CD8-positive, alpha-beta T cell (primary cell): ENCODE measurements at regions of chr5 and their contacts with region 1.

Region 1: GRCh38 chr5:140113699-140114263 is at the start of gene PURA:
- DNase-seq: peak; percentile 93 to 98 (median 98)
- ATAC-seq: peak; percentile 91
- H3K4me3 ChIP-seq: peak within 1 kb of the TSS; percentile 74 to 88
- H3K4me3 Mint-ChIP-seq: peak within 1 kb of the TSS; percentile 91
- H3K27ac ChIP-seq: peak within 1 kb of the TSS; percentile 82 to 84
- H3K27ac Mint-ChIP-seq: peak within 1 kb of the TSS; percentile 95
- H3K4me1 ChIP-seq: peaks cover 69% of the 10 kb centered on the region
- H3K4me1 Mint-ChIP-seq: peaks cover 77% of the 10 kb centered on the region
- H3K27me3 ChIP-seq: no peaks in the 10 kb centered on the region
- H3K27me3 Mint-ChIP-seq: peaks cover 12% of the 10 kb centered on the region
- CTCF ChIP-seq: no peak
- total RNA-seq, gene PURA: 4.0 to 4.3 TPM

Region 2: GRCh38 chr5:138337685-138338410 is 1775.9 kb before region 1 on chr5 and contains the start of gene FAM53C:
- CTCF ChIA-PET with region 1: no interaction called
- POLR2A ChIA-PET with region 1: no interaction called
- intact Hi-C with region 1: loop called in 1 of 2 experiments (anchors 5 kb)
- DNase-seq: peak; percentile 88 to 98 (median 91)
- ATAC-seq: peak; percentile 84
- H3K4me3 ChIP-seq: peak within 1 kb of the TSS; percentile 69 to 85
- H3K4me3 Mint-ChIP-seq: peak within 1 kb of the TSS; percentile 93
- H3K27ac ChIP-seq: peak within 1 kb of the TSS; percentile 95 to 99
- H3K27ac Mint-ChIP-seq: peak within 1 kb of the TSS; percentile 100
- H3K4me1 ChIP-seq: peaks cover 23% of the 10 kb centered on the region
- H3K4me1 Mint-ChIP-seq: peaks cover 41% of the 10 kb centered on the region
- H3K27me3 ChIP-seq: no peaks in the 10 kb centered on the region
- H3K27me3 Mint-ChIP-seq: no peaks in the 10 kb centered on the region
- CTCF ChIP-seq: no peak
- total RNA-seq, gene FAM53C: 99.8 to 99.9 TPM

Region 3: GRCh38 chr5:139403787-139404483 is 709.8 kb before region 1 on chr5 and contains the start of gene SPATA24:
- CTCF ChIA-PET with region 1: no interaction called
- POLR2A ChIA-PET with region 1: no interaction called
- intact Hi-C with region 1: loop called in 1 of 2 experiments (anchors 10 kb)
- DNase-seq: peak; percentile 93 to 99 (median 98)
- ATAC-seq: peak; percentile 88
- H3K4me3 ChIP-seq: peak within 1 kb of the TSS; percentile 61
- H3K4me3 Mint-ChIP-seq: peak within 1 kb of the TSS; percentile 95
- H3K27ac ChIP-seq: peak within 1 kb of the TSS; percentile 68 to 94
- H3K27ac Mint-ChIP-seq: peak within 1 kb of the TSS; percentile 99
- H3K4me1 ChIP-seq: peaks cover 16% of the 10 kb centered on the region
- H3K4me1 Mint-ChIP-seq: peaks cover 32% of the 10 kb centered on the region
- H3K27me3 ChIP-seq: no peaks in the 10 kb centered on the region
- H3K27me3 Mint-ChIP-seq: no peaks in the 10 kb centered on the region
- CTCF ChIP-seq: no peak
- total RNA-seq, gene SPATA24: 2.2 to 3.0 TPM

Region 4: GRCh38 chr5:140145818-140146522 is 32.2 kb after region 1 on chr5:
- CTCF ChIA-PET with region 1: interaction called, 43 read pairs
- POLR2A ChIA-PET with region 1: interaction called, 9 read pairs
- intact Hi-C with region 1: loop called (anchors 2 kb)
- DNase-seq: peak in 8 of 9 experiments; percentile 22 to 72 (median 52)
- ATAC-seq: peak; percentile 69
- H3K4me3 ChIP-seq: peak overlapping the region; percentile 32 to 36
- H3K4me3 Mint-ChIP-seq: peak overlapping the region; percentile 66
- H3K27ac ChIP-seq: no peak overlapping the region
- H3K27ac Mint-ChIP-seq: no peak overlapping the region
- H3K4me1 ChIP-seq: peaks cover 22% of the 10 kb centered on the region
- H3K4me1 Mint-ChIP-seq: peaks cover 18% of the 10 kb centered on the region
- H3K27me3 ChIP-seq: peaks cover 7 to 8% of the 10 kb centered on the region in 2 experiments
- H3K27me3 Mint-ChIP-seq: peaks cover 18% of the 10 kb centered on the region
- CTCF ChIP-seq: peak; percentile 64

Region 5: GRCh38 chr5:140401362-140402257 is 287.8 kb after region 1 on chr5 and contains the start of gene ANKHD1:
- CTCF ChIA-PET with region 1: no interaction called
- POLR2A ChIA-PET with region 1: no interaction called
- intact Hi-C with region 1: loop called (anchors 2 to 5 kb)
- DNase-seq: peak; percentile 91 to 100 (median 95)
- ATAC-seq: peak; percentile 77
- H3K4me3 ChIP-seq: peak within 1 kb of the TSS; percentile 86 to 92
- H3K4me3 Mint-ChIP-seq: no peak within 1 kb of the TSS
- H3K27ac ChIP-seq: peak within 1 kb of the TSS; percentile 89 to 90
- H3K27ac Mint-ChIP-seq: peak within 1 kb of the TSS; percentile 91
- H3K4me1 ChIP-seq: peaks cover 37% of the 10 kb centered on the region
- H3K4me1 Mint-ChIP-seq: peaks cover 36% of the 10 kb centered on the region
- H3K27me3 ChIP-seq: no peaks in the 10 kb centered on the region
- H3K27me3 Mint-ChIP-seq: no peaks in the 10 kb centered on the region
- CTCF ChIP-seq: no peak
- total RNA-seq, gene ANKHD1: 209 to 212 TPM

Region 6: GRCh38 chr5:140639148-140639979 is 525.6 kb after region 1 on chr5 and contains the start of gene TMCO6:
- CTCF ChIA-PET with region 1: no interaction called
- POLR2A ChIA-PET with region 1: no interaction called
- intact Hi-C with region 1: loop called (anchors 5 to 10 kb)
- DNase-seq: peak; percentile 94 to 98 (median 97)
- ATAC-seq: peak; percentile 99
- H3K4me3 ChIP-seq: peak within 1 kb of the TSS; percentile 91 to 95
- H3K4me3 Mint-ChIP-seq: peak within 1 kb of the TSS; percentile 92
- H3K27ac ChIP-seq: peak within 1 kb of the TSS; percentile 72 to 93
- H3K27ac Mint-ChIP-seq: peak within 1 kb of the TSS; percentile 93
- H3K4me1 ChIP-seq: peaks cover 9% of the 10 kb centered on the region
- H3K4me1 Mint-ChIP-seq: peaks cover 30% of the 10 kb centered on the region
- H3K27me3 ChIP-seq: no peaks in the 10 kb centered on the region
- H3K27me3 Mint-ChIP-seq: no peaks in the 10 kb centered on the region
- CTCF ChIP-seq: peak; percentile 70
- total RNA-seq, gene TMCO6: 16.7 to 20.6 TPM

Region 7: DNA sequence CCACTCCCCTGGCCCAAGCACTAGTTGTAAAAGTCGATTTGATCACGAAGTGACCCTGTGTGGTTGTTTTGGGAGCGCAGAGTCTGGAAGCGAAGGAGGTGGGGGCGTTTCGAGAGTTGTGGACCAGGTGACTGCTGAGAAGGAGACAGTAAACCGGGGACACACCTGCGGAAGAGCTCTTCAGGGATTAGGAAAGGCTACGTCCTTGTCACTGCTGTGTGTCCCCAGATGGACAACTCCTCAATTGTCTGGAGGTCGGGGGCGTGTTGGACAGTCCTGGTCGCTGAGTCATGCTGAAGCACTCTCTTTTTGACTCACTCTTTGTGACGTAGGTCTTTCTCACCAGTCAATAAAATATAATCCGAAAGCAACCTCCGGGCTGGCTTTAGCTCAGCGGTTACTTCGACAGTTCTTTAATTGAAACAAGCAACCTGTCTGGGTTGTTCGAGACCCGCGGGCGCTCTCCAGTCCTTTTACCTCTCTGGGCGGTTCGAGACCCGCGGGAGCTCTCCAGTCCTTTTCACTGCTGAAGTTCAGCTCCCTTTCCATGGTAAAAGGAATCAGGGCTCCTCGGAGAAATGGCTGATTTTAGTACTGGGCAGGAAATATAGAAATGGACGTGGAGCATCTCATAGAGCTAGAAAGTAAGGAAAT is 597.2 kb after region 1 on chr5:
- CTCF ChIA-PET with region 1: no interaction called
- POLR2A ChIA-PET with region 1: no interaction called
- intact Hi-C with region 1: loop called in 1 of 2 experiments (anchors 5 kb)
- DNase-seq: peak; percentile 66 to 95 (median 85)
- ATAC-seq: peak; percentile 83
- H3K4me3 ChIP-seq: peak overlapping the region; percentile 58 to 74
- H3K4me3 Mint-ChIP-seq: peak overlapping the region; percentile 99
- H3K27ac ChIP-seq: peak overlapping the region; percentile 72 to 86
- H3K27ac Mint-ChIP-seq: peak overlapping the region; percentile 99
- H3K4me1 ChIP-seq: no peaks in the 10 kb centered on the region
- H3K4me1 Mint-ChIP-seq: peaks cover 16% of the 10 kb centered on the region
- H3K27me3 ChIP-seq: no peaks in the 10 kb centered on the region
- H3K27me3 Mint-ChIP-seq: no peaks in the 10 kb centered on the region
- CTCF ChIP-seq: no peak